KBM-7 (cell line): ENCODE measurements at regions of chr11 and their contacts with region 1.

Region 1: DNA sequence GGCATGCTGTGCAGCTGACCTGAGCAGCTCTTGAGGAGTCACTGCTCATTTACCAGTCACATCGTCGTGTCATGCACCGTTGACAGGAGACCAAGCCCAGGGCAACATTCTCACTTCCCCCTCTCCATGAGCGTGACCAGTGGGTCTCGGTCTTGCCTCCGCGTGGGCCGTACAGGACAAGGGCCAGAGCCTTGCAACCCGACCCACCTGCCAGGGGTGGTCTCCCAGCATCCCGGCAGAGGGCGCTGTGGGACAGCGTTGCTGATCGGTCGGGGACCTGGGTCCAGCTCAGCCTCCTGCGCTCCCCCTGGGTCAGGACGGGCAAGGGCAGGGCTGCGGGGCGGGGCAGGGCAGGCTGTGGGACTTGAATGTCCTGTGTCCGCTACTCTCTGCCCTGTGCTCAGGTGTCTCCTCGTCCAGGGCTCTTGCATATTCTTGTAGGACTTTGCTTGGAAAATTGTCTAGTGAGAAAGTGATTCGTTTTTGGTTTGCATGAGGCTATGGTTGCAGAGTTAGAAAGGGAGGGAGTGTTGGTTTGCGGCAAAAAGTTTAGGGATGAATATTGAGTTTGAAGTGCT is 16.2 kb downstream of the EIF4G2 start:
- DNase-seq: peak; percentile 79

Region 2: GRCh38 chr11:11028017-11028692 is 235.7 kb after region 1 on chr11:
- in situ Hi-C with region 1: loop called (anchors 10 kb)
- DNase-seq: peak; percentile 81